ENCODE measurements at regions of chr5 and their contacts with region 1.

Region 1: GRCh38 chr5:141338538-141339306 is at the start of gene PCDHGA2:
- DNase-seq: peak; percentile 16
- H3K4me3 ChIP-seq: peak within 1 kb of the TSS; percentile 30
- CTCF ChIP-seq: peak; percentile 44

Region 2: GRCh38 chr5:141387233-141387949 is 48.7 kb after region 1 on chr5 and contains the start of gene PCDHGB4:
- in situ Hi-C with region 1: loop called (anchors 5 kb)
- DNase-seq: no peak
- H3K4me3 ChIP-seq: peak within 1 kb of the TSS; percentile 24
- CTCF ChIP-seq: peak; percentile 49

Region 3: DNA sequence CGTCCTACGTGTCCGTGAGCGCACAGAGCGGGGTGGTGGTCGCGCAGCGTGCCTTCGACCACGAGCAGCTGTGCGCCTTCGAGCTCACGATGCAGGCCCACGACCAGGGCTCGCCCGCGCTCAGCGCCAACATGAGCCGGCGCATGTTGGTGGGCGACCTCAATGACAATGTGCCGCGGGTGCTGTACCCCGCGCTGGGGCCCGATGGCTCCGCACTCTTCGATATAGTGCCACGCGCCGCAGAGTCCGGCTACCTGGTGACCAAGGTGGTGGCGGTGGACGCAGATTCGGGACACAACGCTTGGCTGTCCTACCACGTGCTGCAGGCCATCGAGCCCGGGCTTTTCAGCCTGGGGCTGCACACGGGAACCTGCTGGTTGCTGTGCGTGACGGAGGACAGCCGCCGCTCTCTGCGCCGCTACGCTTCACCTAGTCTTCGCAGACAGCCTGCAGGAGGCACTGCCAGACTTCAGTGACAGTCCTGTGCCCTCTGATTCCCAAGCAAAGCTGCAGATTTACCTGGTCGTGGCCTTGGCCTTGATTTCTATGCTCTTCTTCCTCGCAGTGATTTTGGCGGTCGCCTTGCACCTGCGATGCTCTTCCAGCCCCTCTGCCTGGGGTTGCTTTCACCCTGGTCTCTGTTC is 89.2 kb after region 1 on chr5:
- in situ Hi-C with region 1: loop called (anchors 5 kb)
- DNase-seq: no peak
- H3K4me3 ChIP-seq: no peak overlapping the region
- CTCF ChIP-seq: no peak